IMR-90 (cell line): ENCODE measurements at regions of chr14 and their contacts with region 1.

Region 1: DNA sequence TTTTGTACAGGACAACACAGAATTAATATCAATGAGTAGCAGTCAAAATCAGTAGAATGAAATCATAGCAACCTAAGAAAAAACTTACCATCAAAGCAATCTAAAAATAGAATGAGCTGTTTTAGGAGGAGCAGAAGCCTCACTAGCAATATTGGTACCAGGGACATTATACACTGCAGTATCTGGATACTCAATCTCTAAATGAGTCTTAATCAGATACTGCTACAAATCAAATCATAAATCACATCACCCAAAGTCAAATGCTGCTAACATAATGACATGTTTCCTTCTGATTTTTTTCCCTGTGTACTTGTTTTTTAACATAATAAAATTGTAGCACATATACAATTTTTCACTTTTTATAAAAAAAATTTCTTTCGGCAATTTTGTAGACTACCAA is 8.0 kb downstream of the RPS29 start:
- DNase-seq: no peak
- ATAC-seq: no peak
- H3K4me3 ChIP-seq: no peak overlapping the region
- H3K27ac ChIP-seq: no peak overlapping the region
- H3K4me1 ChIP-seq: no peaks in the 10 kb centered on the region
- H3K27me3 ChIP-seq: no peaks in the 10 kb centered on the region
- CTCF ChIP-seq: no peak
- POLR2A ChIP-seq: no peak
- RAD21 ChIP-seq: no peak

Region 2: DNA sequence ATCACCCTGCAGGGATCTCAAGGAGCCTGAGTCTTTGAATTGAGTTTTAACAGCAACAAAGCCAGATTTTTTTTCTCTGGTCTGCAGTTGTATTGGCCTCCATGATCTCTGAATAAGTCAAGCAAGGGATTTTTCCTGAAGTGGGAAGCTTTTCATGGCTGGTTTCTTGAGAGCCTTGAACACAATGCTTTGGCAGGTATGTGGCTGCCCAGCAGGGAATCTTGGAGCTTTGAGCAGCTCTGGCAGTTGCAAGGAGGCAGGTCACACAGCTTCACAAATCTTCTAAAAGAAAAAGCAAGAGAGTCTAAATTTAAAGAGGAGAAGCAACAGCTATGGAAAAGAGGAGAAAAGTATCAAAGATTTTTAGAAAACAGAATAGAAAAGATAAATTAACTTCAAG is 52.0 kb before region 1 on chr14:
- CTCF ChIA-PET with region 1: no interaction called
- POLR2A ChIA-PET with region 1: no interaction called
- dilution Hi-C with region 1: no loop called
- in situ Hi-C with region 1: no loop called
- intact Hi-C with region 1: loop called (anchors 1 kb)
- DNase-seq: no peak
- ATAC-seq: no peak
- H3K4me3 ChIP-seq: no peak overlapping the region
- H3K27ac ChIP-seq: no peak overlapping the region
- H3K4me1 ChIP-seq: no peaks in the 10 kb centered on the region
- H3K27me3 ChIP-seq: peaks cover 1% of the 10 kb centered on the region; the same call in 1 of the 2 replicates
- CTCF ChIP-seq: no peak
- POLR2A ChIP-seq: no peak
- RAD21 ChIP-seq: no peak